ENCODE measurements at regions of chr1 and their contacts with region 1.

Region 1: GRCh38 chr1:223683586-223684487 is 18.3 kb upstream of the CAPN8 start:
- DNase-seq: peak; percentile 77
- ATAC-seq: peak; percentile 95
- H3K4me3 Mint-ChIP-seq: no peak overlapping the region
- H3K27ac Mint-ChIP-seq: no peak overlapping the region
- H3K4me1 Mint-ChIP-seq: no peaks in the 10 kb centered on the region
- H3K27me3 Mint-ChIP-seq: peaks cover 3% of the 10 kb centered on the region
- CTCF ChIP-seq: peak; percentile 75

Region 2: DNA sequence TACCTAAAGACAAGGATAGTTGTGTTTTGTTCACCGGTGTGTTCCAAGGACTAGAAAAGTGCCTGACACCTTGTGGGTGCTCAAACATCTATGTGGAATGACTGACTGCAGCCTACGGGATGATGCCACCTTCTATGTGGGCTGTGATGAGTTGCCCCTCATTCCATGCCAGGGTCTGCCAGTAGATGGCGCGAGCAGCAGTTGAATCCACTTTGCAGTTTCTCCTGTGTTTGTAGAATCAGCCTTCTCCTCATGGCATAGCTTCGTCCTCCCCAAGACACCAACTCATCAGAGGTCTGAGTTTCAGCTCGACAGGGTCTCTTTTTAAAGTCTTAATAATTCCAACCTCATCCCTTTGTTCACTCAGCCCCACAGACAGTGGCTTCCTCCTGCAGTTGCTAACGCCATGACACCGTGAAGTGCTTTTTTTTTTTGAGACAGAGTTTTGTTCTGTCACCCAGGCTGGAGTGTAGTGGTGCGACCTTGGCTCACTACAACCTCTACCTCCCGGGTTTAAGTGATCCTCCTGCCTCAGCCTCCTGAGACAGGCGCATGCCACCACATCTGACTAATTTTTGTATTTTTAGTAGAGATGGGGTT is 152.0 kb before region 1 on chr1:
- CTCF ChIA-PET with region 1: interaction called, 17 read pairs
- POLR2A ChIA-PET with region 1: no interaction called
- DNase-seq: peak; percentile 86
- ATAC-seq: peak; percentile 96
- H3K4me3 Mint-ChIP-seq: no peak overlapping the region
- H3K27ac Mint-ChIP-seq: no peak overlapping the region
- H3K4me1 Mint-ChIP-seq: peaks cover 10% of the 10 kb centered on the region
- H3K27me3 Mint-ChIP-seq: no peaks in the 10 kb centered on the region; the same call in 1 of the 2 replicates
- CTCF ChIP-seq: peak; percentile 62

Region 3: DNA sequence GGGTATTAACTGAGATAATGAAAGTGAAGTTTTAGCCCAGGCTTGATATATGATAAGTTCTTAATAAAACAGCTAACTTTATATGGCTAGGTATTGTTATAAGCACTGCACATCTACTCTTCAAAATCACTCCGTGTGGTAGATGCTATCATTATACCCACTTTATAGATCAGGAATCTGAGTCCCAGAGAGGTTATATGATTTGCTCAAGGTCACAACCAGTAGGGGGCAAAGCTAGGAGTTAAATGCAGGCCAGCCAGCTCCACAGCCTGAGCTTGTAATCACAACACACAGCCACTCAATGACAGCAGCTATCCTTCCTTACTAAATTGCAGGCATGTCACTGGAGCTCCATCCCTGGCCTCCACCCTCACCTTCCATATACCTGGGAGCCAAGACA is 134.1 kb before region 1 on chr1:
- CTCF ChIA-PET with region 1: interaction called, 11 read pairs
- POLR2A ChIA-PET with region 1: interaction called, 5 read pairs
- DNase-seq: no peak
- ATAC-seq: no peak
- H3K4me3 Mint-ChIP-seq: no peak overlapping the region
- H3K27ac Mint-ChIP-seq: no peak overlapping the region
- H3K4me1 Mint-ChIP-seq: peaks cover 7% of the 10 kb centered on the region
- H3K27me3 Mint-ChIP-seq: no peaks in the 10 kb centered on the region
- CTCF ChIP-seq: no peak

Region 4: GRCh38 chr1:223670458-223671168 is 13.2 kb before region 1 on chr1:
- CTCF ChIA-PET with region 1: interaction called, 13 read pairs
- POLR2A ChIA-PET with region 1: no interaction called
- DNase-seq: peak; percentile 66
- ATAC-seq: peak; percentile 97
- H3K4me3 Mint-ChIP-seq: no peak overlapping the region
- H3K27ac Mint-ChIP-seq: no peak overlapping the region
- H3K4me1 Mint-ChIP-seq: peaks cover 3% of the 10 kb centered on the region; the same call in 1 of the 2 replicates
- H3K27me3 Mint-ChIP-seq: peaks cover 10% of the 10 kb centered on the region
- CTCF ChIP-seq: peak; percentile 63; the same call in 1 of the 2 replicates

Region 5: GRCh38 chr1:223695941-223696340 is 12.1 kb after region 1 on chr1:
- CTCF ChIA-PET with region 1: interaction called, 10 read pairs
- POLR2A ChIA-PET with region 1: no interaction called
- DNase-seq: no peak
- ATAC-seq: no peak
- H3K4me3 Mint-ChIP-seq: no peak overlapping the region
- H3K27ac Mint-ChIP-seq: no peak overlapping the region
- H3K4me1 Mint-ChIP-seq: no peaks in the 10 kb centered on the region; the same call in 1 of the 2 replicates
- H3K27me3 Mint-ChIP-seq: no peaks in the 10 kb centered on the region; the same call in 1 of the 2 replicates
- CTCF ChIP-seq: no peak

Measured in WTC11 (cell line).